ENCODE measurements at regions of chr17 and their contacts with region 1.

Region 1: DNA sequence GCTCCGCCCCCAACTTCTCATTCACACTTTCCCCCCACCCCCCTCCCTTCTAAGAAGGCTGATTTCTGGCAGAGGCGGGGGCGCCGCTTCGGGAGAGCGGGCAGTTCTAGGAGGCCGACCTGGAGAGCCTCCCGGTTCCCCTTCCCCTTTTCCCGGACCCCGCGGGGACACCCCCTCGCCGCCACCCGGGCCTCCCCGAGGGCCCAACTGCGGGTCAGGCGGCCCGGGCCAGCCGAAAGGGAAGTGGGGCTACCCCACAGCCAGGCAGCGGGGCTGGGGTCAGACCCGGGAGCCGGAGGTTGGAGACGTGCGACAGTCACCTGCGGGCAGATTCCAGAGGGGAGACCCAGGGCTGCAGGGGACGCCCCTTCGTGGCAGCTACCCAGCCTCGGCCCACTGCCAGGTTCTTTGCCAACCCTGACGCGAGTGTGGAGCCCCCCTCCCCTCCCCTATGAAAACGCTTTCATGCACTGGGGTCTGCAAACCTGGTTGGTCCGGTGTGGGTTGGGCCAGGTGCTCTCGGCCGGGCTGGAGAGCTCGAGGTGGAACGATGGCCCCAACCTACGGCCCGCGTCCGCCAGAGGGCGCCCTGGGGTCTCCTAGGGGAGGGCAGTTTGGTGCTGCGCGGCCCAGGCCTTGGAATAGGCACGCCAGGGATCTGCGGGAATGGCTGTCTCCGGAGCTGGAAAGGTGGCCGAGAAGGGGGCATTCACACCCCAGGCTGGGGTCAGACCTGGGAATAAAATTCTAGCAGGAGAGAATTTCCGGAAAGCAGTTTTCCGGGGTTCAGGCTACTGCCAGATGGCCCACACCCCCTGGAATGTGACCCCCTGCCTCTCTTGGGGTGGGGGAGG is 721 bp upstream of the SOCS3 start:
- DNase-seq: peak; percentile 88
- ATAC-seq: peak; percentile 28
- H3K4me3 ChIP-seq: peak overlapping the region in 4 of 5 experiments; percentile 41 to 76 (median 64)
- H3K4me3 Mint-ChIP-seq: peak overlapping the region; percentile 91
- H3K27ac ChIP-seq: peak overlapping the region; percentile 8 to 66
- H3K27ac Mint-ChIP-seq: peak overlapping the region; percentile 90
- H3K4me1 ChIP-seq: peaks cover 39 to 52% of the 10 kb centered on the region in 2 donors
- H3K4me1 Mint-ChIP-seq: peaks cover 39% of the 10 kb centered on the region
- H3K27me3 ChIP-seq: peaks cover 0 to 35% (median 7%) of the 10 kb centered on the region in 4 experiments
- H3K27me3 Mint-ChIP-seq: peaks cover 20% of the 10 kb centered on the region
- CTCF ChIP-seq: peak; percentile 92

Region 2: GRCh38 chr17:78128551-78129350 is 231.8 kb before region 1 on chr17 and contains the start of gene TMC6:
- CTCF ChIA-PET with region 1: no interaction called
- POLR2A ChIA-PET with region 1: no interaction called
- intact Hi-C with region 1: loop called (anchors 1 kb)
- DNase-seq: peak; percentile 88
- ATAC-seq: peak; percentile 21
- H3K4me3 ChIP-seq: peak within 1 kb of the TSS; percentile 38 to 97 (median 89)
- H3K4me3 Mint-ChIP-seq: peak within 1 kb of the TSS; percentile 96
- H3K27ac ChIP-seq: peak within 1 kb of the TSS; percentile 88 to 92
- H3K27ac Mint-ChIP-seq: peak within 1 kb of the TSS; percentile 99
- H3K4me1 ChIP-seq: peaks cover 68 to 80% of the 10 kb centered on the region in 2 donors
- H3K4me1 Mint-ChIP-seq: peaks cover 73% of the 10 kb centered on the region
- H3K27me3 ChIP-seq: no peaks in the 10 kb centered on the region
- H3K27me3 Mint-ChIP-seq: no peaks in the 10 kb centered on the region
- CTCF ChIP-seq: no peak
- total RNA-seq, gene TMC6: 891 and 910 TPM in 2 replicates

Region 3: GRCh38 chr17:78289802-78290363 is 70.7 kb before region 1 on chr17:
- CTCF ChIA-PET with region 1: interaction called, 45 read pairs
- POLR2A ChIA-PET with region 1: interaction called, 14 read pairs
- intact Hi-C with region 1: loop called (anchors 1 kb)
- DNase-seq: peak; percentile 89
- ATAC-seq: peak; percentile 98
- H3K4me3 ChIP-seq: no peak overlapping the region
- H3K4me3 Mint-ChIP-seq: no peak overlapping the region
- H3K27ac ChIP-seq: no peak overlapping the region
- H3K27ac Mint-ChIP-seq: no peak overlapping the region
- H3K4me1 ChIP-seq: peaks cover 3 to 10% of the 10 kb centered on the region in 2 donors
- H3K4me1 Mint-ChIP-seq: no peaks in the 10 kb centered on the region
- H3K27me3 ChIP-seq: no peaks in the 10 kb centered on the region
- H3K27me3 Mint-ChIP-seq: no peaks in the 10 kb centered on the region
- CTCF ChIP-seq: peak; percentile 74

Region 4: DNA sequence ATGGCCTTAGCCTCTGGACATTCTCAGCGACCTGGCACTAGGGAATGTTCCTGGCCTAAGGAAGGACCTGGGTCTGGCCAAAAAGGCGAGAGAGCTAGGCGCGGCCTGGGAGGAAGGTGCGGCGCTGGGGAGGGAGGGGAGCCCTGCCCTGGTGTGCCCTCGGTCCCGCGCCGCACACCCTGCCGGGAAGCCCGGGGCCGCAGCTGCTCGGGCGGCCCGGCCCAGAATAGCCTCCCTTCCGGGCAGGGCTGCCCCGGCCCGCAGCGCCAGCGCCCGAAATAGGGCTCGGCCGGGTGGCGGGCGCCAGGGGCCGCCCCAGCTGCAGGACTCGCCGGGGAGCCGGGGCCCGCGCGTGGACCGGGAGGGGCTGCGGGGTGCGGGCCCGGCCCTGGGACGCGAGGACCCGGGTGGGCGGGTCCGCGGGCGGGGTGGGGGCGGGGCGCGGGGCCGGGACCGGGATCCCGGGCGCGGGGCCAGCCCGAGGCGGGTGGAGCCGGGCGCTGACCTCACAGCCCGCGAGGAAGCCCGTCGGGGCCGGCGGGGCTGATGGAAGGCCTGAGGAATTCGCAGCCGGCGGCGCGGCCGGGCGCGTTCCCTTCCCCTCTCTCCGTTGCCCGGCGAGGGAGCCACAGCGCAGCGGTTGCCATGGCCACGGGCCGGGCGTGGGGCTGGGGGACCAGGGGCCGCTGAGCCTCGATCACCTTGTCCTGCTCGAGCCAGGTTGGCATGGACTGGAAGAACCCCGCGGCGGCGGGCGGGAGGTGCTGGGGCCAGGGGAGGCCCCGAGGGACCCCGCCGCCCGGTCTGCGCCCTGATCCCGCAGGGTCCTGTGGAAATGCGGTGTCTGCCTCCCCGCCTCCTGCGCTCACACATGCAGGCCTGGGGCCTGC is 18.8 kb before region 1 on chr17:
- CTCF ChIA-PET with region 1: interaction called, 171 read pairs
- POLR2A ChIA-PET with region 1: interaction called, 12 read pairs
- intact Hi-C with region 1: loop called (anchors 1 kb)
- DNase-seq: peak; percentile 57
- ATAC-seq: no peak
- H3K4me3 ChIP-seq: peak overlapping the region in 4 of 5 experiments; percentile 26 to 58 (median 53)
- H3K4me3 Mint-ChIP-seq: peak overlapping the region; percentile 85
- H3K27ac ChIP-seq: peak overlapping the region; percentile 95
- H3K27ac Mint-ChIP-seq: peak overlapping the region; percentile 41
- H3K4me1 ChIP-seq: peaks cover 71 to 80% of the 10 kb centered on the region in 2 donors
- H3K4me1 Mint-ChIP-seq: peaks cover 76% of the 10 kb centered on the region
- H3K27me3 ChIP-seq: no peaks in the 10 kb centered on the region
- H3K27me3 Mint-ChIP-seq: no peaks in the 10 kb centered on the region
- CTCF ChIP-seq: no peak

Region 5: GRCh38 chr17:78383725-78384471 is 23.3 kb after region 1 on chr17:
- CTCF ChIA-PET with region 1: interaction called, 18 read pairs
- POLR2A ChIA-PET with region 1: no interaction called
- intact Hi-C with region 1: loop called (anchors 2 kb)
- DNase-seq: peak; percentile 41
- ATAC-seq: no peak
- H3K4me3 ChIP-seq: peak overlapping the region in 1 of 5 experiments; percentile 22
- H3K4me3 Mint-ChIP-seq: peak overlapping the region; percentile 62
- H3K27ac ChIP-seq: peak overlapping the region; percentile 28 to 78
- H3K27ac Mint-ChIP-seq: peak overlapping the region; percentile 71
- H3K4me1 ChIP-seq: peaks cover 66 to 80% of the 10 kb centered on the region in 2 donors
- H3K4me1 Mint-ChIP-seq: peaks cover 79% of the 10 kb centered on the region
- H3K27me3 ChIP-seq: no peaks in the 10 kb centered on the region
- H3K27me3 Mint-ChIP-seq: no peaks in the 10 kb centered on the region
- CTCF ChIP-seq: no peak

Region 6: GRCh38 chr17:78421484-78422266 is 61.1 kb after region 1 on chr17:
- CTCF ChIA-PET with region 1: interaction called, 54 read pairs
- POLR2A ChIA-PET with region 1: no interaction called
- intact Hi-C with region 1: loop called (anchors 1 kb)
- DNase-seq: peak; percentile 82
- ATAC-seq: peak; percentile 96
- H3K4me3 ChIP-seq: no peak overlapping the region
- H3K4me3 Mint-ChIP-seq: no peak overlapping the region
- H3K27ac ChIP-seq: no peak overlapping the region
- H3K27ac Mint-ChIP-seq: no peak overlapping the region
- H3K4me1 ChIP-seq: no peaks in the 10 kb centered on the region
- H3K4me1 Mint-ChIP-seq: peaks cover 1% of the 10 kb centered on the region
- H3K27me3 ChIP-seq: no peaks in the 10 kb centered on the region
- H3K27me3 Mint-ChIP-seq: no peaks in the 10 kb centered on the region
- CTCF ChIP-seq: peak; percentile 99

Measured in B cell (primary cell).